Dorsolateral prefrontal cortex (tissue), 120 donors: ENCODE measurements at regions of chr2 and their contacts with region 1.

Region 1: DNA sequence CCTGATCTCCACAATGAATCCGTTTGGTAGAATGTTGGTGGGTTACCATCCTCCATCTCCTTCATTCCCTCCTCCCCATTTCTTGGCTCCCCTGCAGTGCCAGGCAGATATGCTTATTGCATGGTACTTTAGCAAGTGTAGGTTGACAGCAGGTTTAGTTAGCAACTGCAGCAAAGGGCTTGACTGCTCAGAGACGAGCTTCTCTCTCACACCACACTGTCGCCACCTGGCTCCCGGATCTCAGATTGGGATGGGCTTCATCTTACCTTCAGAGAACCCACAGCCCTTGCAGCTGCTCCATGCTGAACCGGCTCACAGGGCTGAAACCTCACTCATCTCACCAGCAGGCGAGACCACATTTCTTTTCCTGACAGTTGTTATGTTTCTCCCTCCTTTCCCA is 88.8 kb downstream of the VWA3B start:
- DNase-seq: no peak
- H3K4me3 ChIP-seq: no peak overlapping the region
- H3K27ac ChIP-seq: peak overlapping the region in 23 of 59 donors; percentile 0 to 90 (median 32)
- H3K27me3 ChIP-seq: no peaks in the 10 kb centered on the region
- CTCF ChIP-seq: peak in 3 of 56 donors; percentile 8 to 20 (median 15)

Region 2: DNA sequence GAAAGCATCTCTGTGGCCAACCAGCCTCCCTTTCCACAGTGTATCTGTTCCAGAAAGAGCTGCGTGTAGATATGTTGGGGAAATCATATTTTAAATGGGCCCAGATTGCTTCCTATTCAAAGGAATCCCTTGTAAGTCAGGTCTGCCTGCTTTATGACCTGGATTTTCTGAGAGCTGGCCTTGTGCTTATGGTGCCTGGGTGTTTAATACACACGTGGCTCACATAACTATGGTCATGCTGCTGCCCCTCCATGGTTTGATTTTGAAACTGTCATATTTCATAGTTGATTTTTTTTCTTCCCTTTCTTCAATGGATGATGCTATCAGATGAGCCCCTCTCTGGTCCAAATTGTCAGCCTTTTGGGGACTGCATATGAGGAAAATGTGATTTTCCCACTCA is 59.0 kb after region 1 on chr2:
- intact Hi-C with region 1: loop called in 1 of 2 experiments (anchors 5 kb)
- DNase-seq: no peak
- H3K4me3 ChIP-seq: no peak overlapping the region
- H3K27ac ChIP-seq: no peak overlapping the region
- H3K27me3 ChIP-seq: no peaks in the 10 kb centered on the region
- CTCF ChIP-seq: no peak

Region 3: DNA sequence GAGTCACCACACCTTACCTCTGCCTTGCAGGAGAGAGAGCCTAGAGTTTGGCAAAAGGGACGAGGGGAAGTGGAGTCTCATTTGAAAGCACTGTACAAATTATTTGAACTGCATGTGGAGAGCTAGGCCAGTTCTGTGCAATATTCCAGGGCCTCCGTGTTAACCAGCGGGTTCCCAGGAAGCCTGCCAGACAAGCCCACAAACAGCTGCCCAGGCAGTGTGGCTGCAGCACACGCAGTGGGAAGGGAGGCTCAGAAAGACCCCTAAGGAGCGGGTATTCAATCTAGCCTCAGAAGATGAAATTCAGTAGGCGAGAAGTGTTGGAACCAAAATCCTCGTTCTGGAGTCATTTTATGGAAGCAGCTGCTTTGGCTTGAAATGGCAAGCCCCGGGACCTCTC is 201.2 kb after region 1 on chr2:
- intact Hi-C with region 1: no loop called
- DNase-seq: no peak
- H3K4me3 ChIP-seq: no peak overlapping the region
- H3K27ac ChIP-seq: peak overlapping the region in 23 of 59 donors; percentile 1 to 65 (median 29)
- H3K27me3 ChIP-seq: no peaks in the 10 kb centered on the region
- CTCF ChIP-seq: no peak